Pancreas (tissue), 10 donors: ENCODE measurements at regions of chr5 and their contacts with region 1.

Region 1: DNA sequence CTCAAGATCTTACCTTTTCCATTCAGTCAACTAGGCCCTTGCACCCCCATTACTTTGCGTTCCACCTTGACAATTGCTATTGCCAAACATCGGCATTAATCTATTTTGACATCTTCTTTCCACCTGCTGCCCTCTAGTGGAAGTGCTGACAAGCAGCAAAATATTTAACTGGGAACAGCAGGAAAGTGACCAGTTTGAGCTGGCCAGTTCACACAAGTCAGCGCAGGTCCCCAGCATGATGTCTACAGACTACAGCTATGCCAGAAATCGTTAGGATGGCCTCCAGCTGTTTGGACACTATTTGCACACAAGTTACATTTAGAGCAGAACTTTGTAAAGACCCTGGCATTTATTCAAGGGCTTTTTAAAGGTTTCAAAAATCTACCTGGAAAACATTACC is 160.1 kb downstream of the GHR start:
- DNase-seq: peak in 4 of 6 donors; percentile 15 to 61 (median 36)
- ATAC-seq: peak; percentile 71 to 93 (median 88)
- H3K4me3 ChIP-seq: no peak overlapping the region
- H3K27ac ChIP-seq: no peak overlapping the region
- H3K4me1 ChIP-seq: no peaks in the 10 kb centered on the region
- H3K27me3 ChIP-seq: no peaks in the 10 kb centered on the region
- CTCF ChIP-seq: peak; percentile 47 to 65 (median 56)

Region 2: DNA sequence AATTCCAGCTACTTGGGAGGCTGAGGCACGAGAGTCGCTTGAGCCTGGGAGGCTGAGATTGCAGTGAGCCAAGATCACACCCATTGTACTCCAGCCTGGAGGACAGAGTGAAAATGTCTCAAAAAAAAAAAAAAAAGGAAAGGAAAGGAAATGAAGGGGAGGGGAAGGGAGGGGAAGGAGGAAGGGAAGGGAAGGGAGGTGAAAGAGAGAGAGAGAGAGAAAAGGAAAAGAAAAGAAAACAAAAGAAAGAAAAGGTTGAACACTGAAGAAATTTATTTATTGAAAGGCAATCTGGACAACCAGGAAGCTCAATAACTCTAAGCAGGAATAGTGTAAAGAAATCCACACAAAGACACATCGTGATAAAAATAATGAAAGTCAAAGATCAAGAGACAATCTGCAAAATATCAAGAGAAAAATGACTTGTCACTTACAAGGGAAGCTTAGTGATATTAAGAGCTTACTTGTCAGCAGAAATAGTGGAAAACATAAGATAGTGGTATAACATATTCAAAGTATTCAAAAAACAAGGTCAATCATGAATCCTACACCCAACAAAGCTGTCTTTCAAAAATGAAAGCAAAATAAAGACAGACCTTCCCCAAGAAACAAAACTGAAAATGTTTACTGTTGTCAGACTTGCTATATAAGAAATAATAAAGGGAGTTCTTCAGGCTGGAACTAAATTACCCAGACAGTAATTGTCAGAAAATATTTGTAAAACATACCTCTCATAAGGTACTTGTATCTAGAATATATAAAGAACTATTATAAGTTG is 690.1 kb before region 1 on chr5:
- intact Hi-C with region 1: no loop called
- DNase-seq: no peak
- ATAC-seq: no peak
- H3K4me3 ChIP-seq: no peak overlapping the region
- H3K27ac ChIP-seq: no peak overlapping the region
- H3K4me1 ChIP-seq: no peaks in the 10 kb centered on the region
- H3K27me3 ChIP-seq: peaks cover 0 to 21% (median 0%) of the 10 kb centered on the region in 4 donors
- CTCF ChIP-seq: no peak

Region 3: DNA sequence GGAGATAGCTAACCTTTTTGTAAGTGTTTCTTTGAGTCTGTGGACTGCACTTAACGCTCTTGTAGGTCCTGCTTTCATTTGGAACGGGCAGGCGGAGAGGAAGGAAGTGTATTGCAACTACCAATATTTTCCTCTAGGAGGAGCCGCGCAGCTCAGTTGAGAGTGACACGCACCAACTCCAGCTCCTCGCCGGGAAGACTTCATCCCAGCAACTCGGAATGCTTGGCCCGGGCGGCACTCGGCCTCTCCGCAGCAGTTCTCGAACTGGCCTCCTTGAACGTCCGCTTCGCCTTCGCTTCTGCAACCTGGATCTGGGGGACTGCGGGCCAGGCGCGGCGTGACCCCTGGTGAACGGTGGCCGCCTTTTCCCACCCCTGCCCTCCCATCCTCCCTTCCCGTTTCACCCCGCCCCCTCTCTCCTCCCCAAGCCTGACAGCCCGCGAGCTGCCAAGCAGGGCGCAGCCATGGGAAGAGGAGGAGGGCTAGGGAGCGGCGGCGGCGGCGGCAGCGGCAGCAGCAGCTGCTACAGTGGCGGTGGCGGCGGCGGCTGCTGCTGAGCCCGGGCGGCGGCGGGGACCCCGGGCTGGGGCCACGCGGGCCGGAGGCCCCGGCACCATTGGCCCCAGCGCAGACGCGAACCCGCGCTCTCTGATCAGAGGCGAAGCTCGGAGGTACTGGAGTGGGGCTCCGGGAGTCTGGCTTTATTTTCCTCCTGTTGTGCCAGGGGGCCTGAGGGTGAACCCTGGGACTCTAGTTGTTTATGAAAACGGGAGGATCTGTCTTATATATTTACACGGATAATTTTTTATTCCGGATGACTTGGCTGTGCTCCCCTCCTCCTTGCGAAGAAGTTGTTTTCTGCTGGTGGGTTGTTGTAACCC is 159.8 kb before region 1 on chr5 and contains the start of gene GHR:
- intact Hi-C with region 1: loop called in 1 of 3 experiments (anchors 10 kb)
- DNase-seq: peak; percentile 76 to 89 (median 82)
- ATAC-seq: peak; percentile 93 to 98 (median 96)
- H3K4me3 ChIP-seq: peak within 1 kb of the TSS; percentile 43 to 67 (median 50)
- H3K27ac ChIP-seq: peak within 1 kb of the TSS; percentile 41 to 59 (median 57)
- H3K4me1 ChIP-seq: peaks cover 0 to 5% (median 5%) of the 10 kb centered on the region in 3 donors
- H3K27me3 ChIP-seq: no peaks in the 10 kb centered on the region
- CTCF ChIP-seq: peak; percentile 40 to 76 (median 54)
- total RNA-seq, gene GHR: 0.73 to 3.9 (median 1.5) TPM